WTC11 (cell line): ENCODE measurements at regions of chr16 and their contacts with region 1.

Region 1: DNA sequence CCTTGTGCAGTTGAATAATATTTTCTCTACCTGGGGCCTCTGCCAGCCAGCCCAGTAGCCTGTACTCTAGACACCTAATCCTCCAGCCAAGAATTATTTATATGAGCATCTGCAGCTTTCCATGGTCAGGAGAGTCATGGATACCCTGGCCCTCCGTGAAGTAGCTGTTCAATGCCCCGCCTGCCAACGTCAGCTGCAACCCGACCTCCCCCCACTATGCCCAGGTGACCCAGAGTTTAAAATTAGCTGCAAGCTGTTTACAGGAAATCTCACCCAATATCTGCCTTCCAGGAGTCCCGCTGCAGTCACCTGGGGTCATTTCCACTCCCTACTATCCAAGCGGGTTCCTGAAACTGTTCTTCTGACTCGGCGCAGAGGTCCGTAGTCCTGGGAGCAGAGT is 12.3 kb downstream of the SDR42E2 start:
- DNase-seq: no peak
- ATAC-seq: no peak
- H3K4me3 Mint-ChIP-seq: no peak overlapping the region
- H3K27ac Mint-ChIP-seq: no peak overlapping the region
- H3K4me1 Mint-ChIP-seq: no peaks in the 10 kb centered on the region
- H3K27me3 Mint-ChIP-seq: no peaks in the 10 kb centered on the region
- CTCF ChIP-seq: no peak

Region 2: GRCh38 chr16:22123146-22123545 is 51.5 kb before region 1 on chr16:
- CTCF ChIA-PET with region 1: interaction called, 14 read pairs
- POLR2A ChIA-PET with region 1: no interaction called
- DNase-seq: no peak
- ATAC-seq: peak; percentile 81
- H3K4me3 Mint-ChIP-seq: no peak overlapping the region
- H3K27ac Mint-ChIP-seq: no peak overlapping the region
- H3K4me1 Mint-ChIP-seq: no peaks in the 10 kb centered on the region
- H3K27me3 Mint-ChIP-seq: peaks cover 6% of the 10 kb centered on the region; the same call in 1 of the 2 replicates
- CTCF ChIP-seq: no peak